KBM-7 (cell line): ENCODE measurements at regions of chr10 and their contacts with region 1.

Region 1: DNA sequence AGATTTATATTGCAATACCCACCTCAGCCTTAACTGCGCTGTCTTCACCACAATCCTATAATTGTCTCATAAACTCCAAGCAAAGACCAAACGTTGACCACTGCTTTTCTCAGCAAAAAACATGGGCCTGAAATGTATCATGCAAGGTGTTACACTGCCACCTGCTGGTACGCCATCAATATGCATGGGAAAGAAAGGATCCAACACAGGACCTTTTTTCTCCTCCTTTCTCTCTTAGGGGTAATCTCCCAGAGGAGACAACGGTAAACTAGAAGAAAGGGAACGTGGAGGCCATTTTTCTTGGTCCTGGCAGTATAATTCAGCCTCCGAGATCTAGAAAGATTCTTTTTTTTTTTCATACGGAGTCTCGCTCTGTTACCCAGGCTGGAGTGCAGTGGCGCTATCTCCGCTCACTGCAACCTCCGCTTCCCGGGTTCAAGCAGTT is 79.1 kb upstream of the MPP7 start:
- DNase-seq: peak; percentile 87

Region 2: DNA sequence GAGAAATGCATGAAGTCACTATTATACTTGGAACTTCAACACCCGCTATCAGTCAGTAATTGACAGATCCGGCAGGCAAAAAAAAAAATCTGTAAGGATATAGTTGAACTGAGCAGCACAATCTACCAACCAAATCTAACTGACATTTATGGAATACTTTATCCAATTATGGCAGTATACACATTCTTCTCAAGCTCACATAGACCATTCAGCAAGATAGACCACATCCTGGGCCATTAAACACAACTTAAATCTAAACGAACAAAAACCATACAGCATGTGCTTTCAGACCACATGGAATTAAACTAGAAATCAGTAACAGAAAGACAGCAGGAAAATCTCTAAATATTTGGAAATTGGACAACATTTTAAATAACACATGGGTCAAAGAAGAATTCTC is 191.7 kb before region 1 on chr10:
- in situ Hi-C with region 1: no loop called
- DNase-seq: no peak

Region 3: GRCh38 chr10:28250782-28251181 is 131.1 kb before region 1 on chr10:
- in situ Hi-C with region 1: loop called (anchors 25 kb)
- DNase-seq: peak; percentile 8